ENCODE measurements at regions of chr16 and their contacts with region 1.

Region 1: GRCh38 chr16:65121870-65122723 is at the start of gene CDH11:
- DNase-seq: no peak
- H3K4me3 ChIP-seq: peak within 1 kb of the TSS; percentile 94
- CTCF ChIP-seq: peak; percentile 64

Region 2: DNA sequence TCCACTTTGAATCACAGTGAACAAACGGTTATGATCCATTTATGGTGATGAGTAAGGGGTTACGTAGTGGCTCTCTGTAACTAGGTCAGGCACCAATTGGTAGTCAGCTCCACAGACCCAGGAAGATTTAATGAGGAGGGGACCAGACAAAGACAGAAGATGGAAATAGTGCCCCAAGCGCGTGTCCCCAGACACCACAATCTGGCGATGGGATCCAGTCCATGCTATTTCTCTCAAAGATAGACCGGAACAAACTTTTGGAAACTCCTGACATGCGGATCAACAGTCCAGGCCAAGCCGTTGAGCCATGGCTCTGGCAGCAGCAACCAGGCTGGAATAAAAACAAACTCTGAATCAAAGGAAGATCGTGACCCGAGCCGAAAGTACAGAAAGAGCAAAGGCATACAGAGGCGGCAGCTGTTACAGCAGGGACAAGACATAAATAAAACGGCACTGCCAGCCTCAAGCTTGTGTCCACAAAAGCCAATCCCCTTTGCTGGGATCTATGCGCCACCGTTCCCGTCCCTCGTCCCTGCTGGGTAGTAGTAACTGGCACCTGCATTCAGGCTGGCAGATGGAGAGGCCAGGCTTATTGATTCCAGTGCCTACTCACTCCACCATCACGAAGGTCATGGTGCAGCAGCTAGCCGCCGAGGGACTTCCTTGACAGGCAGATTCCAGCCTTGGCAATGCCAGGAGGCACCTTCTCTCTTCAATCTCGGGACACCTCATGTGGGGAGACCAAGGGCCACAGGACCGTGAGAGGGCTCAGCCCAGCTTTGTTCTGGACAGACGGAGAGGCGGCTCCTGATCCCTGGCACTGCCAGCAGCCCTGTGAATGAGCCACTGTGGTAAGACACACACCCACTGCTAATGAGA is 50.4 kb before region 1 on chr16:
- CTCF ChIA-PET with region 1: no interaction called
- POLR2A ChIA-PET with region 1: no interaction called
- DNase-seq: no peak
- H3K4me3 ChIP-seq: no peak overlapping the region
- CTCF ChIP-seq: no peak

Region 3: DNA sequence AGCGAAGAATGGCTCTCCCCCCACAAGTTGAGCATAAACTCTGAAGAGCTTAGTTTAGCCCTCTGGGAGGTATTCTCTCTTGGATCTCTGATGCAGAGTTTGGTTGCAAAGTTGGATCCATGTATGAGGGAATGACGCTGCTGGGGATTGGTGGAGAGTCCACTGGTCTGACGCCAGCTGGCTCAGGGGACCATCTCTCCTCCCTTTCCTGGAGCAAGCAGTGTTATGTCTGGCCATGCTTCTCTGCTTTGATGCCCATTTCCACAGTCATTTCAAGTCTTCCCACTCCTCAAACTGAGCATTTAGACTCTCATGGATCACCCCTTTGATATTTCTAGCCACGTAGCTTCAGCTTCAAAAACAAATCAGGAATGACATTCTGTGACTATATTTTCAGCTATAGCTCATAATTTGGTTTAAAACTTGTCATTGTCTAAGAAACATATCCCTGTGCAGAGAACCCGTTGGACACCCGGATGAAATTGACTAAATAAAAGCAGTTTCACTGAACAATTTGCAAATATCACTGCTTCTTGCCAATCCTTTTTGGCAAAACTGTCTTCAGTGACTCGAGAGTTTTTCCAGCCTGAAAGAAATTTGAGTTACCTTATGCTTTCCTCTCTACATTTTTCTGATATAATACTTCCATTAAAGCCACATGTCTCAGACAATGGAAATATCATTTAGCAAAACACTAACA is 193.1 kb after region 1 on chr16:
- CTCF ChIA-PET with region 1: interaction called, 5 read pairs
- POLR2A ChIA-PET with region 1: interaction called, 10 read pairs
- DNase-seq: no peak
- H3K4me3 ChIP-seq: no peak overlapping the region
- CTCF ChIP-seq: no peak

Region 4: GRCh38 chr16:66270333-66270927 is 1148.3 kb after region 1 on chr16:
- CTCF ChIA-PET with region 1: interaction called, 12 read pairs
- POLR2A ChIA-PET with region 1: interaction called, 3 read pairs
- DNase-seq: no peak
- H3K4me3 ChIP-seq: peak overlapping the region; percentile 46
- CTCF ChIP-seq: peak; percentile 88

Measured in AG04449 (cell line).